ENCODE measurements at regions of chr17 and their contacts with region 1.

Region 1: GRCh38 chr17:36212966-36213365 is 2.1 kb downstream of the CCL4L2 start:
- DNase-seq: peak; percentile 54 to 91 (median 70)
- H3K4me3 ChIP-seq: peak overlapping the region in 1 of 3 experiments; percentile 39
- H3K4me3 Mint-ChIP-seq: peak overlapping the region in 1 of 2 donors; percentile 49
- H3K27ac ChIP-seq: peak overlapping the region in 1 of 2 donors; percentile 71
- H3K27ac Mint-ChIP-seq: peak overlapping the region; percentile 24 to 98 (median 94)
- H3K4me1 ChIP-seq: peaks cover 66 to 67% of the 10 kb centered on the region in 2 donors
- H3K4me1 Mint-ChIP-seq: peaks cover 66% of the 10 kb centered on the region
- H3K27me3 ChIP-seq: no peaks in the 10 kb centered on the region
- H3K27me3 Mint-ChIP-seq: peaks cover 0 to 6% (median 3%) of the 10 kb centered on the region in 3 donors
- CTCF ChIP-seq: no peak

Region 2: DNA sequence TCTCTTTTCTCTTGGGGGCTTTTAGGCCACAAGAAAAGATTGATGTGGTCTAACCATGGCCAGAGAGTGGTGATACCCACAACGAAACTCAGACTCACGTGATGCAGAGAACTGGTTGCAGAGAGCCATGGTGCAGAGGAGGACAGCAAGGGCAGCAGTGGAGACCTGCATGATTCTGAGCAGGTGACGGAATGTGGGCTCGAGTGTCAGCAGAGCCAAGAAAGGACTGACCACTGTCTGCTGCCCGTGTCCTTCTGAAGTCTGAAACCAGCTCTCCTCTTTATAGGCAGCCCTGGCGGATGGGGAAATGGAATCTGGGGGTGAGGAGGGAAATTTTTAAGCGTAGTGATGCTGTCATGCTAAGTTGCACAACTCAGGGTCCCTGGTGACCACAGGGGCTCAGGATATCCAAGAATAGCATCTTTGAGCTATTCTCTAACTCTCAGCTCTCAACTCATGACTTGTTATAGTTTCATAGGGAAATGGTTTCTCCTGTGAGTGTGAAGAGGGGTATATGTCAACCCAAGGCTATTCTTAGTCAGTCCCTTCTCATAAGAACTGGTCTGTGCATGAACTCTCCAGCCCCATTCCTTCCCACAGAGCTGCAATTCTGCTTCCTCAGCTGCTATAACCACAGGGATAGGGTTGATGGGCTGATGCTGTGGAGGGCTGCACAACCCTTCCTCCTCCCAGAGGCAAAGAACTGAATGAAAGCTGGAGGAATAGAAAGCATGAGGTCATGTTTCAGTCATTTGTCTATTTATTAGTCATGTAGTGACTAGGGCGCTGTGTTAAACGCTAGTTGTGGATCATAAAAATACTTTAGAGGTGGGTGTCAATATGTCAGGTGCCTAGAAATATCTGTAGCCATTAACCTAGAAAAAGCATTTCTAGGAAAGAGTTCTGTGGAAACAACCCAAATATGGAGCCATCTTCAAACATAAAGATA is 122.8 kb before region 1 on chr17 and contains the start of gene CCL3:
- intact Hi-C with region 1: loop called in 1 of 2 experiments (anchors 5 kb)
- DNase-seq: peak; percentile 89 to 99 (median 89)
- H3K4me3 ChIP-seq: peak within 1 kb of the TSS in 1 of 3 experiments; percentile 47
- H3K4me3 Mint-ChIP-seq: peak within 1 kb of the TSS; percentile 73 to 80
- H3K27ac ChIP-seq: peak within 1 kb of the TSS; percentile 78 to 79
- H3K27ac Mint-ChIP-seq: peak within 1 kb of the TSS; percentile 94 to 99 (median 97)
- H3K4me1 ChIP-seq: peaks cover 45 to 60% of the 10 kb centered on the region in 2 donors
- H3K4me1 Mint-ChIP-seq: peaks cover 58% of the 10 kb centered on the region
- H3K27me3 ChIP-seq: no peaks in the 10 kb centered on the region
- H3K27me3 Mint-ChIP-seq: peaks cover 2 to 18% (median 4%) of the 10 kb centered on the region in 3 donors
- CTCF ChIP-seq: no peak
- polyA plus RNA-seq, gene CCL3: 161 to 328 (median 190) TPM

Region 3: DNA sequence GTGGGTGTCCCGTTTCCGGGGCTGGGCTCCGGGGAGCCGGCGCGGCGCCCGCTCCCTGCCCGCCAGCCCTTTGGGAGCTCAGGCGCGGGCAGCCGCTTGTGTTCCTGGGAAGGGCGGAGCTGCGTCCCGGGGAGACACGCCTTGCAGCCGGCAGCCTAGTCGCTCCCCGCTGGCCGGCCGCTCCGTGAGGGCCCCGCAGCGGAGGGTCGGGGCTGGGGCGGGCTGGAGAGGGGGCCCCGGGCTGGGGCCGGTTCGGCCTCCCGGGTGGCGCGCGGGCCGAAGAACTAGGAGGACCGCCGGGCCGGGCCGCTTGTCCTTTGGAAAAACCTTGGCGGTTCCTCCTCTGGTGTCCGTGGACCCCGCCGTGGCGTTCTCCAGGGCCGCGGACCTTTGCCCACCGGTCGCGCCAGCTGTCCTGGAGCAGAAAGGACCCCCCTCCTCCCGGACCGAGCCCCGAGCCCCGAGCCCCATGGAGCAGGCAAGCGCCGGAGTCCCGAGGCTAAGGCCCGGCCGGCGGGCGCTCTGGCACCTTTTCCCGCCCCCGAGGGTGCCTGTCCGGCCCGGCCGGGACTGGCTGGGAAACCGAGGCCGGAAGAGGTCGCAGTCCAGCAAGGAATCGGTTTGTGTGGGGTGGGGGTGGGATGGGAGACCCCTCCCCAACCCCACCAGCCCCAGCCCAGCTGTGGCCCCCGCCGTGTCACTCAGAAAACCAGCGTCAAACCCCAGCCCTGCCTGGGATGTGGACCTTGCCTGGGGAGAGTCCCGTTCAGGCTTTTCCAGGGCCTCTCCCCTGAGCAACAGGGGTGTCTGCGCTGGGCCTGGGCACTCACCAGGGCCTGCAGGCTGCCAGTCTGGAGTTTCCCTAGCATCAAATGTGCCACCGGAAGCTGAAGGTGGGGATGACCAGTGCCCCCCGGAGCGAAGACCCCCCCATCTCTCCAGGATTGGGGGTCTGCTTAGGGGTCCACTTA is 29.7 kb before region 1 on chr17:
- intact Hi-C with region 1: loop called (anchors 1 to 5 kb)
- DNase-seq: peak in 2 of 3 donors; percentile 64 to 72
- H3K4me3 ChIP-seq: peak overlapping the region; percentile 41 to 76 (median 47)
- H3K4me3 Mint-ChIP-seq: peak overlapping the region; percentile 80 to 94
- H3K27ac ChIP-seq: peak overlapping the region; percentile 49 to 83
- H3K27ac Mint-ChIP-seq: peak overlapping the region in 5 of 7 donors; percentile 48 to 93 (median 84)
- H3K4me1 ChIP-seq: peaks cover 48 to 53% of the 10 kb centered on the region in 2 donors
- H3K4me1 Mint-ChIP-seq: peaks cover 54% of the 10 kb centered on the region
- H3K27me3 ChIP-seq: peaks cover 0 to 6% of the 10 kb centered on the region in 2 donors
- H3K27me3 Mint-ChIP-seq: peaks cover 11 to 15% (median 15%) of the 10 kb centered on the region in 3 donors
- CTCF ChIP-seq: no peak